Activated CD4-positive, alpha-beta T cell treated with anti-CD3 and anti-CD28 coated beads for 36 hours (primary cell): ENCODE measurements at regions of chr18 and their contacts with region 1.

Region 1: GRCh38 chr18:76859474-76860339 is 37.4 kb downstream of the ZNF236 start:
- DNase-seq: peak; percentile 63
- ATAC-seq: peak; percentile 98
- H3K4me3 Mint-ChIP-seq: peak overlapping the region; percentile 41
- H3K27ac Mint-ChIP-seq: peak overlapping the region; percentile 83
- H3K4me1 Mint-ChIP-seq: peaks cover 31% of the 10 kb centered on the region
- H3K27me3 Mint-ChIP-seq: no peaks in the 10 kb centered on the region

Region 2: GRCh38 chr18:76835380-76835779 is 24.3 kb before region 1 on chr18:
- CTCF ChIA-PET with region 1: no interaction called
- POLR2A ChIA-PET with region 1: no interaction called
- intact Hi-C with region 1: loop called in 1 of 2 experiments (anchors 2 kb)
- DNase-seq: no peak
- ATAC-seq: peak; percentile 88
- H3K4me3 Mint-ChIP-seq: no peak overlapping the region
- H3K27ac Mint-ChIP-seq: no peak overlapping the region
- H3K4me1 Mint-ChIP-seq: peaks cover 45% of the 10 kb centered on the region
- H3K27me3 Mint-ChIP-seq: no peaks in the 10 kb centered on the region

Region 3: GRCh38 chr18:76875390-76876325 is 16.0 kb after region 1 on chr18:
- CTCF ChIA-PET with region 1: interaction called, 6 read pairs
- POLR2A ChIA-PET with region 1: interaction called, 3 read pairs
- intact Hi-C with region 1: loop called in 1 of 2 experiments (anchors 1 kb)
- DNase-seq: peak; percentile 67
- ATAC-seq: peak; percentile 74
- H3K4me3 Mint-ChIP-seq: no peak overlapping the region
- H3K27ac Mint-ChIP-seq: peak overlapping the region; percentile 74
- H3K4me1 Mint-ChIP-seq: peaks cover 14% of the 10 kb centered on the region
- H3K27me3 Mint-ChIP-seq: no peaks in the 10 kb centered on the region